WTC11 (cell line): ENCODE measurements at regions of chr18 and their contacts with region 1.

Region 1: GRCh38 chr18:12038639-12039417 is 54.8 kb upstream of the ANKRD62 start:
- DNase-seq: peak; percentile 90
- ATAC-seq: peak; percentile 89
- H3K4me3 Mint-ChIP-seq: peak overlapping the region; percentile 68
- H3K27ac Mint-ChIP-seq: no peak overlapping the region
- H3K4me1 Mint-ChIP-seq: 0 out of 2 replicates have a peak, but pooled peaks cover 4% of the 10 kb centered on the region
- H3K27me3 Mint-ChIP-seq: peaks cover 25% of the 10 kb centered on the region
- CTCF ChIP-seq: peak; percentile 97

Region 2: DNA sequence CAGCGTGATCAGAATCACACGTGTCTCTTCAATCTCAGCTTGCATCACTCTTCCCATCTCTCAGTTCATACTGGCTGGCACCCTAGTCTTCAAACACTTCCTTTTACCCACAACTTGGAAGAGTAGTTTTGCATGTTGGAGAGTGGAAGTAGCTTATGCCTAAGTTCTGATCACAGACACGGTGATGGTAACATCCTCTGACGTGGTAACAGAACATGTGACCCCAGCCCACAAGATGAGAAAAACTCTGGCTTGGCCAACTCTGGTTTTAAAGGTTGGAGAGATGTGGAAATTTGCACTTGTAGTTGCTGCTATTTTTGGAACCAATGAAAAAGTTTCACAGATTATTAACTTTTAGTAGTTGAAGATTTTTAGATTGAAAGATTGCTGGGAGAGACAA is 584.8 kb before region 1 on chr18:
- CTCF ChIA-PET with region 1: no interaction called
- POLR2A ChIA-PET with region 1: no interaction called
- DNase-seq: no peak
- ATAC-seq: no peak
- H3K4me3 Mint-ChIP-seq: no peak overlapping the region
- H3K27ac Mint-ChIP-seq: no peak overlapping the region
- H3K4me1 Mint-ChIP-seq: no peaks in the 10 kb centered on the region
- H3K27me3 Mint-ChIP-seq: no peaks in the 10 kb centered on the region
- CTCF ChIP-seq: no peak

Region 3: GRCh38 chr18:11937874-11938478 is 100.9 kb before region 1 on chr18:
- CTCF ChIA-PET with region 1: interaction called, 57 read pairs
- POLR2A ChIA-PET with region 1: no interaction called
- DNase-seq: peak; percentile 78
- ATAC-seq: peak; percentile 71
- H3K4me3 Mint-ChIP-seq: no peak overlapping the region
- H3K27ac Mint-ChIP-seq: no peak overlapping the region
- H3K4me1 Mint-ChIP-seq: peaks cover 6% of the 10 kb centered on the region
- H3K27me3 Mint-ChIP-seq: no peaks in the 10 kb centered on the region
- CTCF ChIP-seq: peak; percentile 81

Region 4: GRCh38 chr18:11980555-11981382 is 58.1 kb before region 1 on chr18:
- CTCF ChIA-PET with region 1: interaction called, 18 read pairs
- POLR2A ChIA-PET with region 1: interaction called, 12 read pairs
- DNase-seq: peak; percentile 100
- ATAC-seq: peak; percentile 87
- H3K4me3 Mint-ChIP-seq: peak overlapping the region; percentile 73
- H3K27ac Mint-ChIP-seq: peak overlapping the region; percentile 97
- H3K4me1 Mint-ChIP-seq: peaks cover 52% of the 10 kb centered on the region
- H3K27me3 Mint-ChIP-seq: no peaks in the 10 kb centered on the region
- CTCF ChIP-seq: no peak

Region 5: DNA sequence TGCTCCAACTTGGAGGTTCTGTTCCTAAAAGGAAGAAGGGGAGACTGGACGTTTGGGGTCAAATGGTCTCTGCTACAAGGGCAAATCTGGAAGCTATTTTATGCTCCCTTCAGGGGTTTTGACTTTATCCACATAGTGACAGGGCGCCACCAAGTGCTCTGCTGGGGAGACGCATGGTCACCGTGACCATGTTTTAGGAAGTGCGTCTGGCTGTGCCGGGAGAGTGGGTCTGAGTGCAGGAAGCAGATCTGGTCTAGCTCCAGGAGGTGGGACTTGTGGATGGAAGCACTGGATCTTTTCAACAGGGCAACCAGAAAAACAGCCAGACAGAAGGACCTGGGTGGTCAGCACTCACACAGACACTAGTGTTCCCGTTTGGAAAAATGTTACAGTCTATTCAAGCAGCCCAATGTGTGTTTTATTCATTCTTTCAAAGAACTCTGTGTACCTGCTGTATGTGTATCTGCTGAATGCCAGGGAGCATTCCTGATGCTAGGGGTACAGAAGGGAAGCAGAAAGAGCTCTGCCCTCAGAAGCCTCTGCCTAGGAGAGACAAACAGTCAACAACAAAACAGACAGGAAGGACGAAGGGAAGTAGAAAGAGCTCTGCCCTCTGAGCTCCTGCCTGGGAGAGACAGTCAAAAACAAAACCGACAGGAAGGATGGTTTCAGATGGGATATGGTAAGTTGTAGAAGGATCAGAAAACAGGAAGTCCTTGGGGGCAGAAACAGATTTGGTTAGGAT is 43.2 kb before region 1 on chr18:
- CTCF ChIA-PET with region 1: interaction called, 31 read pairs
- POLR2A ChIA-PET with region 1: no interaction called
- DNase-seq: peak; percentile 73
- ATAC-seq: peak; percentile 90
- H3K4me3 Mint-ChIP-seq: peak overlapping the region; percentile 26
- H3K27ac Mint-ChIP-seq: peak overlapping the region; percentile 92
- H3K4me1 Mint-ChIP-seq: peaks cover 48% of the 10 kb centered on the region
- H3K27me3 Mint-ChIP-seq: no peaks in the 10 kb centered on the region
- CTCF ChIP-seq: peak; percentile 47

Region 6: DNA sequence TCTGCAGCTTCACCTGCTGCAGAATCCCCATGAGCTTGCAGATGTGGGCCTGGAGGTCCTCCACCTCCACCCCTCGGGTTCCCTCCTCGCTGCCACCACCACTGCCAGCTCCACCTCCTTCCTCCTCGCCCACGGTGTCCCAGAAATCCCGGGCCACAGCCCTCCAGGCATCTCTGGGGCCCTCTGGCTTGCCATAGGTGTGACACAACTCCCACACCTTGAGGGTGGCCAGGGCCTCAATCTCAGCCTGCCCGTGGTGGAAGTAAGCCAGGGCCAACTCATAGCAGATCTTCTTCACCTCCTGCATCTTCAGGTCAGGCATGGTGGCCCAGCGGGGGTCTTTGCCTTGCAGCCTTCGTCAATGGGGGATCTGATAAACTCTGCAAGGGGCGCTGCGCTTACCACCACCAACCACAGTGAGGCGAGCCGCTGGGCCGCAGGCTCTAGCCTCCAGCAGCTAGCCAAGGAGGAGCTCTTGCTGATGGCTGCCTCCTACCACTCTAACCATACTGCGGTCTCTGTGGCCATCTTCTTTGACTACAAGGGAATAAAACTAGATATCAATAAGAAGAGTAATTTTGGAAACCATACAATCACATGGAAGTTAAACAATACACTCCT is 18.7 kb after region 1 on chr18:
- CTCF ChIA-PET with region 1: interaction called, 10 read pairs
- POLR2A ChIA-PET with region 1: no interaction called
- DNase-seq: peak; percentile 57
- ATAC-seq: peak; percentile 90
- H3K4me3 Mint-ChIP-seq: no peak overlapping the region
- H3K27ac Mint-ChIP-seq: no peak overlapping the region
- H3K4me1 Mint-ChIP-seq: no peaks in the 10 kb centered on the region
- H3K27me3 Mint-ChIP-seq: no peaks in the 10 kb centered on the region; the same call in 1 of the 2 replicates
- CTCF ChIP-seq: peak; percentile 24

Region 7: DNA sequence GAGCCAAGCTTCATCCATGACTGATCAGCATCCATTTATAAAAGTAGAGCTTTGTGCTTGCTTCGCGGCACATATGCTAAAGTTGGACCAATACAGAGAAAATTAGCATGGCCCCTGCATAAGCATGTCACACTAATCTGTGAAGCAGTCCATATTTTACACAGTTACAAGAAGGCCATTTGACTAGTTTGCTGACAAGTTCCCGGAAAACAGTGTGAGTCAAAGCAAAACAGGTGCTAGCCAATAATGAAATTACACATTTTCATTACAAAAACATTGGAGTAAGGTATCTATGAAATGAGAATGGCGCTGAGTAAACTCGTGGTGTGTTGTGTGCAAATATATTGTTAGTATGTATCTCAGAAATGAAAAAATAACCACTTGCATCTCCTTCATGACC is 59.5 kb after region 1 on chr18:
- CTCF ChIA-PET with region 1: no interaction called
- POLR2A ChIA-PET with region 1: no interaction called
- DNase-seq: no peak
- ATAC-seq: no peak
- H3K4me3 Mint-ChIP-seq: no peak overlapping the region
- H3K27ac Mint-ChIP-seq: no peak overlapping the region
- H3K4me1 Mint-ChIP-seq: no peaks in the 10 kb centered on the region
- H3K27me3 Mint-ChIP-seq: peaks cover 4% of the 10 kb centered on the region
- CTCF ChIP-seq: no peak